ENCODE measurements at regions of chr11 and their contacts with region 1.

Region 1: GRCh38 chr11:122655527-122656072 is at the start of gene UBASH3B:
- DNase-seq: peak; percentile 74
- ATAC-seq: peak; percentile 81
- H3K4me3 Mint-ChIP-seq: peak within 1 kb of the TSS; percentile 98
- H3K27ac Mint-ChIP-seq: peak within 1 kb of the TSS; percentile 92
- H3K4me1 Mint-ChIP-seq: peaks cover 50% of the 10 kb centered on the region
- H3K27me3 Mint-ChIP-seq: peaks cover 13% of the 10 kb centered on the region
- total RNA-seq, gene UBASH3B: 66.6 to 75.0 TPM

Region 2: DNA sequence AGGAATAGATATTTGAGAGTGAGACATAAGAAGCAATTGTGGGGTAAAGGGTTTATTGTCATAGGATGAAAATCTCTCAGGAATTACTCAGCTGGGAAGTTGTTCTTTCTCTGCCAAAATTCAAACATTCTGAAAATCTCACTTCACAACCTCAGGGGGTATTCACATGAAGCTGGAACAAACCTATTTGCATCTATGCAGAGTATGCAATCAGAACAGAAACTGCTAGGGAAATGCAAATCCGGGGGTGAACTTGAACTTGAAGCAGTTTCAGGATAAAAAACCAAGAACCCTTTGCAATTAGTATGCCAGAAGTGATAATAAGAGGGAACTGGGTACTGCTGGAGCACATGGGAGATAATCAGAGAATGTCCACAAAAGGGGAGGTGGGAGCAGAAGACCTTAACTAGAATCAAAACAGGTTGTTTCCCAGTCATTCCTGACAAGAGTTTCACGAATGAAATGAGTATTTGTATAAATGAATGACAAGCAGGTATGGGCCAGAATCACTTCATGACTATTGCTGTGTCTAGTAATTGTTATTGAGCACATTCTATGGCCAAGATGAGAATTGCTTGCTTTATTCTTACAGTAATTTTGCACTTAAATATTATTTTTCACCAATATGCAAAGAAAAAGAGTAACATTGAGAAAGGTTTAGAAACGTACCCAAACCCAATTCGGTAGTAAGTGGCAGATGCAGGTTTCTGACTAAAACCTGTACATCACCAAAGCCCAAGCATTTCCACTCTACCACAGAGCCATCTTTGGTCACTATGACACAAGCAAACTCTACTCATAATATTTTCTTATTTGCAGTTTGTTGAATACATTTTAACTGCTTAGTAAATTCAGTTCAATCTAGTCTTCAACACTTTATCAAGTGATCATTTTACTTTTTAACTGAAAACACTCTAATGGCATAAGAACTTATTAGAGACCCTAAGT is 61.9 kb before region 1 on chr11:
- CTCF ChIA-PET with region 1: no interaction called
- POLR2A ChIA-PET with region 1: no interaction called
- DNase-seq: no peak
- ATAC-seq: no peak
- H3K4me3 Mint-ChIP-seq: no peak overlapping the region
- H3K27ac Mint-ChIP-seq: no peak overlapping the region
- H3K4me1 Mint-ChIP-seq: no peaks in the 10 kb centered on the region
- H3K27me3 Mint-ChIP-seq: peaks cover 25% of the 10 kb centered on the region

Region 3: GRCh38 chr11:122628810-122629555 is 26.6 kb before region 1 on chr11:
- CTCF ChIA-PET with region 1: interaction called, 10 read pairs
- POLR2A ChIA-PET with region 1: no interaction called
- DNase-seq: peak; percentile 81
- ATAC-seq: peak; percentile 86
- H3K4me3 Mint-ChIP-seq: no peak overlapping the region
- H3K27ac Mint-ChIP-seq: no peak overlapping the region
- H3K4me1 Mint-ChIP-seq: peaks cover 33% of the 10 kb centered on the region
- H3K27me3 Mint-ChIP-seq: peaks cover 2% of the 10 kb centered on the region

Region 4: GRCh38 chr11:122673701-122674100 is 18.1 kb after region 1 on chr11:
- CTCF ChIA-PET with region 1: interaction called, 42 read pairs
- POLR2A ChIA-PET with region 1: interaction called, 24 read pairs
- DNase-seq: no peak
- ATAC-seq: no peak
- H3K4me3 Mint-ChIP-seq: no peak overlapping the region
- H3K27ac Mint-ChIP-seq: peak overlapping the region; percentile 8
- H3K4me1 Mint-ChIP-seq: peaks cover 71% of the 10 kb centered on the region
- H3K27me3 Mint-ChIP-seq: no peaks in the 10 kb centered on the region

Region 5: DNA sequence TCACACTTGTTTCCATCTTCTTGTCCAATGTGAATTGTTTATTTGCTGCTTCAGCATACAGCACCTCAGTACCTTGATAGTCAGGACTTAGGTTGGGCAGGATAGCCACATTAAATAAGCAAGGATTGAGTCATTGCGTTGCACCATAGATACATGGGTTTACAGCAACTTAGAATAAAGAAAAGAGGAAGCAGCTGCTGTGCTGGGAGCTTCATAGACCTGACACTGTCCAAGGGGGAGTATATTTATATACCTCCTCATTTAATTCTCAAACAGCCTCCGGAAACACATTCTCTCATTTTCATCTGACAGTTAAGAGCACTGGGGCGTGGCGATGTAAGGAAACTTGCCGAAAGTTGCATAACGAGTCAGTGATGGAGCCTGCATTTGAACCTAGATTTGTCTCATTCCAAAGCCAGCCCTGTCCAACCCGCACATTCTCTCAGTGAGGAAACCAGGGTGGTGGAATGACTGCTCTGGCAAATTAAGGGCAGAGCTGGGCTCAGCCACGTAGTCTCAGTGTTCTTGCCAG is 42.1 kb after region 1 on chr11:
- CTCF ChIA-PET with region 1: interaction called, 24 read pairs
- POLR2A ChIA-PET with region 1: interaction called, 26 read pairs
- DNase-seq: peak; percentile 67
- ATAC-seq: peak; percentile 74
- H3K4me3 Mint-ChIP-seq: peak overlapping the region; percentile 57
- H3K27ac Mint-ChIP-seq: peak overlapping the region; percentile 90
- H3K4me1 Mint-ChIP-seq: peaks cover 89% of the 10 kb centered on the region
- H3K27me3 Mint-ChIP-seq: no peaks in the 10 kb centered on the region

Region 6: GRCh38 chr11:122717264-122717867 is 61.8 kb after region 1 on chr11:
- CTCF ChIA-PET with region 1: interaction called, 17 read pairs
- POLR2A ChIA-PET with region 1: interaction called, 8 read pairs
- DNase-seq: peak; percentile 93
- ATAC-seq: peak; percentile 88
- H3K4me3 Mint-ChIP-seq: peak overlapping the region; percentile 67
- H3K27ac Mint-ChIP-seq: peak overlapping the region; percentile 96
- H3K4me1 Mint-ChIP-seq: peaks cover 95% of the 10 kb centered on the region
- H3K27me3 Mint-ChIP-seq: no peaks in the 10 kb centered on the region

Region 7: DNA sequence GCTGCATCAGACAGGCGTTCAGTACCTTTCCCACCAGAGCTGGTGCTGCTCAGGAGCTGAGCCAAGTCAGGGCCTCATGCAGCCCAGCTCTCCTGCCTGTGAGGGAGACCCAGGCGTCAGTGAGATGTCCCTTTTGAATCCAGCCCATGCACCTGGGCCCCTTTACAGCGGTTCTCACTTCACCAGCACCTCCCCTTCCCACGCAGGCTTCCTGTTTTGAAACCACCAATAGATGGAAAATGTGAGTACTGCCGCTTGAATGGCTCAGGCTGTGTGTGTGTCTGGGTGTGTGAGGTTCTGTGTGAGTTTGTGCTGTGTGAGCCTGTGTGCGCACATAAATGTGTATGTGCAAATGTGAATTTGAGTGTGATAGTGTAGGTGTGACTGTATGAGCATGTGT is 88.3 kb after region 1 on chr11:
- CTCF ChIA-PET with region 1: interaction called, 44 read pairs
- POLR2A ChIA-PET with region 1: interaction called, 20 read pairs
- DNase-seq: peak; percentile 88
- ATAC-seq: peak; percentile 83
- H3K4me3 Mint-ChIP-seq: no peak overlapping the region
- H3K27ac Mint-ChIP-seq: no peak overlapping the region
- H3K4me1 Mint-ChIP-seq: peaks cover 18% of the 10 kb centered on the region
- H3K27me3 Mint-ChIP-seq: no peaks in the 10 kb centered on the region

Region 8: DNA sequence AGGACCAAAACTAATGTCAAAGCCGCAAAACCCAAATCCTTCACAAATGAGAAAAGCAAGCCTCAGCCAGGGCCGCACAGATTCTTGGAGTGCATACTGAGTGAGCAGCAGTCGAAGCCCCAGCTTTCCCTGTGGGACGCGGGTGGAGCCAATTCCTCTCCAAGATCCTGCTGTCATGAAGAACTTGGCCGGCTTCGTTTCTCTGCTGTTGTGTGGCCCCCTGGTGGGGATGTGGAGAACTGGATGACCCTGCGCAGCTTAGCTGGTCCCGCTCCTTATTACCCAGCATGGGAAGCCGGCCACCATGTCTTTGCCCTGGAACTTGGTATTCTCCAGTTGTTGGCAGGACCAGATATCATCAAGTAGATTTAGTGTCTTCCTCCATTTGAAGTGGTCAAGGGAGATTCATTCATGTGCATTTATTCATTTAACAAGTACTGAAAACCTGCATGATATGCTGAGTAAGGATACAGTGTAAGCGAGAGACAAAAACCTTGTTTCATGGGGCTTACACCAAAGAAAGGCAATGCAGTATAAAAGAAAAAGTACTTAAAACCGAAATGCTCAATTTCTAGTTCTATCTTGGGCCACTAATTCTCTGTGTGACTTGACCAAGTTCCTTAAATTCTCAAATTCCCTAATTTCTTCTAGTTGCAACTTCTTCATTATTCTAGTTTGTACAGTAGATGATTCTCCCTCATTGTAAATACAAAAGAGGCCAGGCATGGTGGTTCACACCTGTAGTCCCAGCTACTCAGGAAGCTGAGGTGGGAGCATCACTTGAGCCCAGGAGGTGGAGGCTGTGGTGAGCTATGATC is 126.0 kb after region 1 on chr11:
- CTCF ChIA-PET with region 1: interaction called, 15 read pairs
- POLR2A ChIA-PET with region 1: no interaction called
- DNase-seq: peak; percentile 80
- ATAC-seq: peak; percentile 89
- H3K4me3 Mint-ChIP-seq: no peak overlapping the region
- H3K27ac Mint-ChIP-seq: no peak overlapping the region
- H3K4me1 Mint-ChIP-seq: peaks cover 33% of the 10 kb centered on the region
- H3K27me3 Mint-ChIP-seq: no peaks in the 10 kb centered on the region

Region 9: GRCh38 chr11:122832721-122833470 is 177.3 kb after region 1 on chr11:
- CTCF ChIA-PET with region 1: no interaction called
- POLR2A ChIA-PET with region 1: no interaction called
- DNase-seq: no peak
- ATAC-seq: peak; percentile 33
- H3K4me3 Mint-ChIP-seq: no peak overlapping the region
- H3K27ac Mint-ChIP-seq: peak overlapping the region; percentile 44
- H3K4me1 Mint-ChIP-seq: peaks cover 24% of the 10 kb centered on the region
- H3K27me3 Mint-ChIP-seq: no peaks in the 10 kb centered on the region

Region 10: GRCh38 chr11:122882857-122883645 is 227.5 kb after region 1 on chr11:
- CTCF ChIA-PET with region 1: no interaction called
- POLR2A ChIA-PET with region 1: no interaction called
- DNase-seq: peak; percentile 62
- ATAC-seq: peak; percentile 87
- H3K4me3 Mint-ChIP-seq: peak overlapping the region; percentile 73
- H3K27ac Mint-ChIP-seq: peak overlapping the region; percentile 84
- H3K4me1 Mint-ChIP-seq: peaks cover 18% of the 10 kb centered on the region
- H3K27me3 Mint-ChIP-seq: peaks cover 10% of the 10 kb centered on the region